Heart right ventricle (tissue), 16 donors: ENCODE measurements at regions of chr3 and their contacts with region 1.

Region 1: DNA sequence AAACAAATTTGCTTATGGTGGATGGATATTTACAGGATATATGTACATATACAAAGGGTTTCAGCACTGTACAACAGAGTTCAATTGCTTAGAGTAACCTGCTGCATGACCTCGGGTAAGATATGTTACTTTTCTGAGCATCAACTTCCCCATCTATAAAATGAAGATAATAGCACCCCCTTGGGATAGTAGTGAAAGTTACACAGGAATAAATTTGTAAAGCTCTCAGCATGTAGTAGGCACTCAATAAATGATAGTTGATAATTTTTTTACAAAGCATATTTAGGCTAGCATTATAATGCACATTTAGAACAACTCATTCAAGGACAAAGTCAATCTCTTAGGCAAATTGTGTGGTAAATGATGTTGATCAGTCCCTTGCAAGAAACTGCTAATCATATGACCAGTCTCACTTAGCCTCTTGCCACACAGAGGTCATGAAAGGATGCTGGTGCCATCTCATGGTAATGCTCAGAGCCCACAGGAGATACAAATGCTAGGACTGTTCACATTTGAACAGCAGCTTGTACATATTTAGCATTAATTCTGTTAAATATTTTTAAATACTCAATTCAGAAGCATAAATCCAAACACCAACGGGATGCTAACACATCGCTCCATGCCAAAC is 123.9 kb downstream of the MAGI1 start:
- DNase-seq: no peak
- ATAC-seq: peak in 1 of 8 donors; percentile 29
- H3K4me3 ChIP-seq: no peak overlapping the region
- H3K27ac ChIP-seq: no peak overlapping the region
- H3K4me1 ChIP-seq: peaks cover 0 to 57% (median 18%) of the 10 kb centered on the region in 9 donors
- H3K27me3 ChIP-seq: no peaks in the 10 kb centered on the region
- CTCF ChIP-seq: no peak

Region 2: GRCh38 chr3:66138336-66139313 is 223.8 kb after region 1 on chr3:
- intact Hi-C with region 1: loop called in 3 of 10 experiments (anchors 10 kb)
- DNase-seq: peak in 1 of 2 donors; percentile 65
- ATAC-seq: peak; percentile 79 to 94 (median 88)
- H3K4me3 ChIP-seq: no peak overlapping the region
- H3K27ac ChIP-seq: peak overlapping the region in 3 of 10 donors; percentile 46 to 52 (median 51)
- H3K4me1 ChIP-seq: peaks cover 0 to 10% (median 9%) of the 10 kb centered on the region in 9 donors
- H3K27me3 ChIP-seq: no peaks in the 10 kb centered on the region
- CTCF ChIP-seq: peak; percentile 68 to 88 (median 82)